ENCODE measurements at regions of chr1 and their contacts with region 1.

Region 1: GRCh38 chr1:16430606-16431005 is 6.6 kb downstream of the SPATA21 start:
- DNase-seq: no peak
- H3K4me3 ChIP-seq: no peak overlapping the region
- CTCF ChIP-seq: no peak

Region 2: DNA sequence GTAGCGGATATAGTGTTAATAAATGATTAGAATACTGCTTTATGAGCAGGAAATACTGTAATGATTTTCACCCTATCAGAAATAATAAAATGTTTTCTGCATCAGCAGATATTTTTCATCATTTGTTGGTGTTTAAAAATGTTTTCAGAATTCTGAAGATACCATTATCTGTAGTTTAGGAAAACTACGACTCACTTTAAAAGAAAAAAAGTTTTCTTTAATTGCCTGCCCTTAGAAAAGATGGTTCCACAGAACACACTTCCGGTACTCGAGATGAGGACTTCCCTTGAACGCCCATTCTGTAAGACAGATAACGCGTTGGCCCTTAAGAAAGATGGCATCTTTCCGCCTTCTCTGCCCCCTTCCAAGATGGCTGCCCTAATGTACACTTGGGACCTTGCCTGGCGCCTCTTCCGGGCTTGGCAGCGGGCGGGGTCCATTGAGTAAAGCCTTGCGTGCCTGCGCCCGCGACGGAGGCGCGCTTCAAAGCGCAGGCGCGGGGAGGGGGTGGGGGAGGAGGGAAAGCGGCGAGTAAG is 63.8 kb before region 1 on chr1 and contains the start of gene SZRD1:
- in situ Hi-C with region 1: loop called (anchors 10 kb)
- DNase-seq: peak; percentile 99
- H3K4me3 ChIP-seq: peak within 1 kb of the TSS; percentile 91
- CTCF ChIP-seq: no peak

Region 3: GRCh38 chr1:16386454-16387113 is 44.0 kb before region 1 on chr1:
- in situ Hi-C with region 1: loop called (anchors 5 kb)
- DNase-seq: peak; percentile 20
- H3K4me3 ChIP-seq: no peak overlapping the region
- CTCF ChIP-seq: no peak

Region 4: DNA sequence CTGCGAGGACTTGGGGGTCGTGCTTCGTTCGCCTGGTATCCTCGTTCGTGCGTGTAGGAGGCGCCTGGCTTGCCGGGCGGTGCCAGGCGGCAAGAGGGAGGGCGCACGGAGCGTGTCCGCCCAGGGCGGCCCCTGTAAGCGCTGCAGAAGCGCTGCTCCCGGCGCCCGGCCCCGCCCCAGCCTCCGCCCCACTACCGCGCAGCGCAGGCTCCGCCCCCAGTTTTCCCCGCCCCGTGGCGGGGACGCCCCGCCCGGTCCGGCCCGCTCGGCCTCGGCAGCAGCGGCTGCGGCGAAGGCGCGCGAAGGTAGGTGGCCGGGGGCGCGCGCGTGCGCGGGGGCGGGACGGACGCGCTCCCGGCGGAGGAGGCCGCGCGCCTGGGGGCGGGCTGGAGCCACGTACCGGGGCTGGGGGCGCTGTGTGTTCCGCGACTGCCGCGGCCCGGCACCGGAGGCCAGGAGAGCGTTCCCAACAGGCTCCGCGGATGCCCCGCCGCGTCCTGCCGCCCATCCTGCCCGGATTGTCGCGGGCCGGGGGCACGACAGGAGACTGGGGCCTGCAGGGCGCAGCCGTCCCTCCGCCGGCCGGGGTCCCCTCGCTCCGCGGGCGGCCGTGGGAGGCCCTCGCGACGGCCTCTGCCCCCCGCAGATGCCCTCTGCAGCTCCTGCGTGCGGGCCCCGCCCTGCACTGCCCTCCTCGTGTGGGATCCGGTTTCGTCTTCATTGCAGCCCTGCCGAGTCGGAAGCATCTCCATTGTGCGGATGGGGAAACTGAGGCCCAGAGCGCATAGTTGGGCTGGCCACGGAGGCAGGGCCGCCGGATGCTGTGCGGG is 483.4 kb after region 1 on chr1:
- in situ Hi-C with region 1: no loop called
- DNase-seq: peak; percentile 65
- H3K4me3 ChIP-seq: peak overlapping the region; percentile 55
- CTCF ChIP-seq: no peak

Measured in astrocyte of the cerebellum (primary cell).